Motor neuron (in vitro differentiated cells): ENCODE measurements at regions of chr3 and their contacts with region 1.

Region 1: GRCh38 chr3:73868688-73869315 is 244.1 kb upstream of the PDZRN3 start:
- ATAC-seq: peak in 5 of 8 experiments; percentile 43 to 76 (median 59)
- H3K4me3 ChIP-seq: no peak overlapping the region
- H3K27ac ChIP-seq: no peak overlapping the region
- H3K4me1 ChIP-seq: no peaks in the 10 kb centered on the region

Region 2: DNA sequence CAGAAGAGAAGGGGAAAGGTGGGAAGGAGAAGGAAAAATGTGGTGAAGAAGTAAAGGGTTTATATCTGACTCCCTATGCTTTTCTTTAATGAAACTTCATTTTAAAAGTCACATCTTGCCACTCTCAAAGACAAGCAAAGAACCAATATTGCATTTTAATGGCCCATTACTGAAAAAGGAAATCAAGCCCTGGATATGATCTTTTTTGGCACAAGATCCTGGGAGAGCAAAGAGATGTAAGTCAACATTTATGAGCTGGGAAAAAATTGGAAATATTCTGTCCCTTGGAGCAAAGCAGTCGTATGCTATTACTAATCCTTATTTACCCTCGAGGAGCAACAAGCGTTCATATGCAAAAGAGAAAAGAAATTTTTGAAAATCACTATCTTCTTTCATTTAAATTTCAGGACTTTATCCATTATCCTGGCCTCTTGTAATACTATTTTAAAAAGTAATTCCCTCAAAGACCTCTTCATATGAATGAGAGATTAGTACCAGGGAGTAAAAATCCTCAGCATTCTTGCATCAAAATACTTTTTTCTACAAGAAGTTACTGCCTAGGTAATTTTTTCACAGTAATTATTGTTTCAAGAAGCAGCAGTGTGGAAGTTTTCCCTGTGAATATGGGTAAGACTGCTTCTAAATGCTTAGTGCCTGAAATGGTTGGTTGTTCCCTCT is 191.3 kb after region 1 on chr3:
- in situ Hi-C with region 1: no loop called
- ATAC-seq: no peak
- H3K4me3 ChIP-seq: no peak overlapping the region
- H3K27ac ChIP-seq: no peak overlapping the region
- H3K4me1 ChIP-seq: no peaks in the 10 kb centered on the region

Region 3: DNA sequence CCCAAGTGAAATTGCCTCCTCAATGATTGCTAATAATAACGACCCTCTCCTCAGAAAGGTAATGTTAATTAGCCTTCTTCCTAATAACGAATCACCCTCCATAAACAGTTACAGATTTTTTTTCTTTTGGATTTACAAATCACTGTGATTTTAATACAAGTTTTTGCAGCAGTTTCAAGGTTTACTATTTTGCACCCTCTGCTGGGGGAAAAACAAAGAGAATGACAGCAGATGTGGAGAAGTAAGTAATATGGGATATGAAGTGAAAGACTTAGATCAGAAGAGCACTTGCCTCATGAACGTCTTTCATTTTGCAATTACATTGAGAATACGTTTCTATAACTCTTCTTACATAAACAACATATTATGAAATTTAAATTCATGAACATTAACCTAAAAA is 761.8 kb after region 1 on chr3:
- in situ Hi-C with region 1: loop called in 1 of 9 experiments (anchors 25 kb)
- ATAC-seq: peak in 1 of 8 experiments; percentile 28
- H3K4me3 ChIP-seq: no peak overlapping the region
- H3K27ac ChIP-seq: no peak overlapping the region
- H3K4me1 ChIP-seq: no peaks in the 10 kb centered on the region

Region 4: DNA sequence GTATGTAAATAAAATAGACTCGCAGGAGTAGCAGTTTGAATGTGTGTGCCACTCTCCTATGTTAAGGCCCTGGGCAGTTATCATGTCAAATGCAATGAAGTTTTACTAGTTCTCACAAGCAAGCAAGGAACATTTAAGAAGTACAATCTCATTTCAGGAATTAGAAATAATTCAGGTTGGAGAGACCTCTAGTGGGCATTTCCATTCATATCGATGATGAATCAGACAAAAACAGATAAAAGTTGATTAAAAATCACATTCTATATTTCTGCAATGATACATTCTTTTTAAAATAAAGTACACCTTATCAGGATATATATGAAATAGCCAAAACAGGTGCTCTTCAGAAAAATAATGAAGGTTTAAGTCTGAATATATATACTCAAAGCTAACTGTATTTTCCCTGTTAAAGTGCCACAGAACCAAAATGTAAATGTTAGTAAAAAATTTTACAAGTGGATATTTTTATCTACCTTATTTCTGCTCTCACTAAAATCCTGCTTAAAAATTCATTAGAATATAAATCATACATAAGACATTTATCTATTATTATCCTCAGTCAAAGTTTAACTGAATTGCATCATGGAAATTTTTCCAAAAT is 1302.9 kb after region 1 on chr3:
- in situ Hi-C with region 1: loop called in 2 of 9 experiments (anchors 25 kb)
- ATAC-seq: peak in 2 of 8 experiments; percentile 24 to 31
- H3K4me3 ChIP-seq: no peak overlapping the region
- H3K27ac ChIP-seq: no peak overlapping the region
- H3K4me1 ChIP-seq: peaks cover 0 to 8% of the 10 kb centered on the region in 2 donors